CD8-positive, alpha-beta T cell (primary cell): ENCODE measurements at regions of chr19 and their contacts with region 1.

Region 1: GRCh38 chr19:36850559-36851442 is at the start of gene ZNF345:
- DNase-seq: peak; percentile 66 to 94 (median 85)
- ATAC-seq: peak; percentile 81
- H3K4me3 ChIP-seq: peak within 1 kb of the TSS; percentile 83 to 92
- H3K4me3 Mint-ChIP-seq: no peak within 1 kb of the TSS
- H3K27ac ChIP-seq: peak within 1 kb of the TSS; percentile 74 to 94
- H3K27ac Mint-ChIP-seq: no peak within 1 kb of the TSS
- H3K4me1 ChIP-seq: peaks cover 14% of the 10 kb centered on the region
- H3K4me1 Mint-ChIP-seq: peaks cover 20% of the 10 kb centered on the region
- H3K27me3 ChIP-seq: peaks cover 0 to 2% of the 10 kb centered on the region in 2 experiments
- H3K27me3 Mint-ChIP-seq: no peaks in the 10 kb centered on the region
- CTCF ChIP-seq: no peak
- total RNA-seq, gene ZNF345: 7.8 to 8.0 TPM

Region 2: DNA sequence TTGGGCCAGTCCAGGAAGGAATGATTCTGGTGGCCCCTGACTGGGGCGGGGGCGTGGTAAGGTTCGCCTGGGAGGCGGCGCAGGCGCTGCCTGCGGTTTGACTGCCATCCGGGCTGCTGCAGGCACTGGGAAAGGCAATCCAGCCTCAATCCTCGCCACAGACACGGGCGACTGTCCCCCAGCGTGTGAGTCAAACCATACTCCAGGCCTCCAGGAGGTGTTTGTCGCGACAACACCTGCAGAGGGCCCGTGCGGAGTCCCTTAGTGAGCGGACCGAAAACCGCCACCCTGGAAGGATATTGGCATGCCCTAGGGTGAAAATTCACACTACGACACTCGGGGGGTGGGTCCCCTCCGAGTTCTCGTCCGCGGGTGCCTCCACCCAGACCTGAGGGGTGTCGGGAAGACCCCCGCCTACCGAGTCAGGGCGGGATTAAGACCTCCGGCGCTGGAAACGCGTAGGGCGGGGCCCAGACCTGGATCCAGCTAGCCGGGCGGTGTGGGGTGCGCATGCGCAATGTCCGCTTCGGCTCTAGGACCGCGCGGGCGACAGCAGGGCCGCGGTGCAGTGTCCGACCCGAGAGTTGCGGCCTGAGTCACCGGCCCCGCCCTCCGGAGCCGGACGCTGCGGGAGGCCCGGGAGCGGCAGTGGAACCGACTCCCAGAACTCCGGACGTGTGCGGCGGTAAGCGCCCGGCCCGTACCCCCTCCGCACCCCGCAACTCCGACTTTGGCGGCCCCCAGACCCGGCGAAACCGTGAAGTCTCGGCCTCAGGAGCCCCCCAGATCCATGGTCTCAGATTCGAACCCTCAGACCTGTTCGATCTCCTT is 711.1 kb before region 1 on chr19 and contains the start of gene CAPNS1:
- CTCF ChIA-PET with region 1: no interaction called
- POLR2A ChIA-PET with region 1: no interaction called
- intact Hi-C with region 1: loop called in 1 of 2 experiments (anchors 2 kb)
- DNase-seq: peak; percentile 77 to 96 (median 92)
- ATAC-seq: peak; percentile 55
- H3K4me3 ChIP-seq: peak within 1 kb of the TSS; percentile 90 to 99
- H3K4me3 Mint-ChIP-seq: peak within 1 kb of the TSS; percentile 96
- H3K27ac ChIP-seq: peak within 1 kb of the TSS; percentile 83 to 90
- H3K27ac Mint-ChIP-seq: peak within 1 kb of the TSS; percentile 93
- H3K4me1 ChIP-seq: peaks cover 13% of the 10 kb centered on the region
- H3K4me1 Mint-ChIP-seq: peaks cover 14% of the 10 kb centered on the region
- H3K27me3 ChIP-seq: no peaks in the 10 kb centered on the region
- H3K27me3 Mint-ChIP-seq: no peaks in the 10 kb centered on the region
- CTCF ChIP-seq: peak; percentile 26
- total RNA-seq, gene CAPNS1: 141 to 146 TPM

Region 3: DNA sequence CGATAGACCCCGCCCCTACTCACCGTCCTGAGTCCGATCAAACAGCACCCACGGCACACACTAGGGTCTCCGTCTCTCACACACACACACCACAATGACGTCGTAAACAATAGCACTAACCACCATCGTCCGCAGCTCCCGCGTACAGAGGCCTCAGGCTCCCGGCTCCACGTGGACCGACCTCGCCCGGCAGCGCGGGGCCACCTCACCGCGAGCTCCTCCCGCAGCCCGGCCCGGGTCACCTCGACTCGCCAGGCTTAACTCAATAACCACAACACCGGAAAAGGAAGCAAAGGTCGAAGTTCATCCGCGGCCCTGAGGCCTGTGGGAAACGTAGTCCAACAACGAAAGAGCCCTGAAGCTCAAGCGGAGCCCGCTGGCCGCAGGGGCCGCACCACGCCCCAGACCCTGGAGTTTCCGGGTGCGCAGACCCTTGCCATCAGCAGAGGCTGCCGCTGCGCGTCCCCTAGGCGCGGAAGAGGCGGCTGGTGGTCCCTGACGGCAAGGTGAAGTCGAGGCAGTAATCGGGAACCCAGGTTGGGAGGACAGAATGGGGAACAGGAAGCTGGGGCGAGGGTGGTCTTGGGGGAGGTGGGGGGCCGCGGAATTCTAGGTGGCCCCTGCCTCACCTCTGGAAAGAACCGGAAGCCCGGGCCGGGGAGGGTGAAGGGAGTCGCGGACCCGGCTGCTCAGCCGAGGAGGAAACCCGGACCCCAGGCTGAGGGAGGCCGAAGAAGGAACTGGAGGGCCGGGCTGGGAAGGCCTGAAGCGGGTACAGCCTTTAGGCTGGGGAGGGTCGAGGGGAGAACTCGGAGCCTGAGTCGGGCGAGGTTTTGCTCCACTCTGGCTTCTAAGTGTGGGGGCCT is 277.5 kb before region 1 on chr19 and contains the start of gene ZNF529:
- CTCF ChIA-PET with region 1: no interaction called
- POLR2A ChIA-PET with region 1: no interaction called
- intact Hi-C with region 1: loop called in 1 of 2 experiments (anchors 2 kb)
- DNase-seq: peak; percentile 75 to 98 (median 85)
- ATAC-seq: peak; percentile 93
- H3K4me3 ChIP-seq: peak within 1 kb of the TSS; percentile 87 to 99
- H3K4me3 Mint-ChIP-seq: peak within 1 kb of the TSS; percentile 87
- H3K27ac ChIP-seq: peak within 1 kb of the TSS; percentile 96 to 98
- H3K27ac Mint-ChIP-seq: peak within 1 kb of the TSS; percentile 99
- H3K4me1 ChIP-seq: peaks cover 19% of the 10 kb centered on the region
- H3K4me1 Mint-ChIP-seq: peaks cover 45% of the 10 kb centered on the region
- H3K27me3 ChIP-seq: no peaks in the 10 kb centered on the region
- H3K27me3 Mint-ChIP-seq: no peaks in the 10 kb centered on the region
- CTCF ChIP-seq: no peak
- total RNA-seq, gene ZNF529: 44.0 to 46.4 TPM

Region 4: GRCh38 chr19:36837906-36838783 is 12.7 kb before region 1 on chr19 and contains the start of gene ZNF790:
- CTCF ChIA-PET with region 1: interaction called, 23 read pairs
- POLR2A ChIA-PET with region 1: interaction called, 80 read pairs
- intact Hi-C with region 1: loop called (anchors 1 kb)
- DNase-seq: peak; percentile 62 to 92 (median 81)
- ATAC-seq: peak; percentile 87
- H3K4me3 ChIP-seq: peak within 1 kb of the TSS; percentile 86 to 91
- H3K4me3 Mint-ChIP-seq: no peak within 1 kb of the TSS
- H3K27ac ChIP-seq: peak within 1 kb of the TSS; percentile 88 to 97
- H3K27ac Mint-ChIP-seq: no peak within 1 kb of the TSS
- H3K4me1 ChIP-seq: peaks cover 17% of the 10 kb centered on the region
- H3K4me1 Mint-ChIP-seq: peaks cover 21% of the 10 kb centered on the region
- H3K27me3 ChIP-seq: no peaks in the 10 kb centered on the region
- H3K27me3 Mint-ChIP-seq: no peaks in the 10 kb centered on the region
- CTCF ChIP-seq: no peak
- total RNA-seq, gene ZNF790: 2.1 to 3.6 TPM

Region 5: DNA sequence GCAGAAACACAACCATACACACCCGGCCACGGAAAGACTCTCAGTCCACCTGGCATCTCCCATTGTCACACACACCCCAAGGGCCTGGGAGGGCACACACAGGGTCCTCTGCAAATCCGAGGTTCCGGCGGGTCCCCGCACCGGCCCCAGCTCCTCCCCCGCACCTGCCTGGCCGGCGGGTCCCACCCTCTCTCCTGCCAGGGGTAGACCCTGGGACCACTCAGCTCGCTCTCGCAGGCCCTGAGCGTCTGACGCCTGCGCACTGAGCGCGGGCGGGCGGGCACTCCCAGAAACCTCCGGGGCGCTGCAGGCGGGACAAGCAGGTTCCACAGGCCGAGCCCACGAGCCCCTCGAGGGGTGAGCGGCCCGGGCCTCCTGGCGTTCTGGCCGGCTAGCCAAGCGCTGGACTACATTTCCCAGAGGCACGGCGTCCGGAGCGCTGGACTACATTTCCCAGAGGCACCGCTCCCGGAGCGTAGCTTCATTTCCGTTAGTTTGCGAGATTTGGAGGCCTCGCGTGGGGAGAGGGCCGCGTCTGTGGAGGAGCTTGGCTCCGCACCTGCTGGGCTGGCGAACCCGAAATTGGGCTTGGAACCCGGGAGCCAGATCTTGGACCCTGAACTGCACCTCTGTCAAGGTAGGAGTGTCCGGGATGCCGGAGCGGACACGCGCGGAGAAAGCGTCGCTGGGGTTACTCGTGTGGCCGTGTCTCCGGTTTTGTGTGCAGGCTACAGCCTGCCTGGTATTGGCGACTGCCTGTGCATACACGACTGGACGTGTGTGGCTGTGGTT is 227.3 kb after region 1 on chr19 and contains the start of gene ZNF420:
- CTCF ChIA-PET with region 1: no interaction called
- POLR2A ChIA-PET with region 1: interaction called, 7 read pairs
- intact Hi-C with region 1: loop called (anchors 1 kb)
- DNase-seq: peak; percentile 78 to 96 (median 89)
- ATAC-seq: peak; percentile 88
- H3K4me3 ChIP-seq: peak within 1 kb of the TSS; percentile 60 to 71
- H3K4me3 Mint-ChIP-seq: peak within 1 kb of the TSS; percentile 89
- H3K27ac ChIP-seq: peak within 1 kb of the TSS; percentile 56 to 82
- H3K27ac Mint-ChIP-seq: peak within 1 kb of the TSS; percentile 92
- H3K4me1 ChIP-seq: peaks cover 9% of the 10 kb centered on the region
- H3K4me1 Mint-ChIP-seq: peaks cover 34% of the 10 kb centered on the region
- H3K27me3 ChIP-seq: no peaks in the 10 kb centered on the region
- H3K27me3 Mint-ChIP-seq: no peaks in the 10 kb centered on the region
- CTCF ChIP-seq: no peak
- total RNA-seq, gene ZNF420: 7.0 to 8.9 TPM

Region 6: DNA sequence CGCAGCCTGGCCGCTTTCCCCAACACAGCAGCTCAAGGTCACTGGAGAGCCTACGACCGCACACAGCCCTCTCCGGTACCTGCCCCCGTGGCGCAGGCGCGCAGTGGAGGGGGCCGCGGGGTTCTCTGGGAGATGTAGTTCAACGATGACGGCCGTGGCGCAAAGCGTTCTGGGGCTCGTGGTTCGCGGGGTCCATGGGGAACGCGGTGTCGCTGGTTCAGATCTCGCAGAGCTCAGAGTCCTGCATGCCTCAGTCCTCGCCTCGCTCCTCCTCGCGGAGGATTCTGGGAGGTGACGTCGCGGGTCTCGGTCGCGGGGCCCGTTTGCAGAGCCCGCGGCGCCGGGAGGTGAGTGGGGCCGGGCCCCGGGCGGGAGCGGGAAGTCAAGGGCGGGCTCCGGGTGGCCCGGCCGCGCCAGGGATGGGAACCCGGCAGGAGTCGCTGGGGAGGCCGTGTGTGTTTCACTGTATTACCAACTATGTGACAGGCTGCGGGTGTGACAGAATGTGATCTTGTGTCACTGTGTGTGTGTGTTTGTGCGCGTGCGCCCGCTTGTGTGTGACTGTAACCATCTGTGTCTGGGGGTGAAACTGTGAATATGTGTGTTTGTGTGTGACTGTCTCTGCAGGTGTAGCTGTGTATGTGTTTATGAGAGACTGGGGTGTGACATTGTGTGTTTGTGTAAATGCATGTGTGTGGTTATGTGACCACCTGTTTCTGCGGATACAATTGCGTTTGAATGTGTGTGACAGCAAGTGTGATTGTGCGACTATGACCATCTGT is 520.3 kb after region 1 on chr19 and contains the start of gene ZNF527:
- CTCF ChIA-PET with region 1: no interaction called
- POLR2A ChIA-PET with region 1: no interaction called
- intact Hi-C with region 1: loop called in 1 of 2 experiments (anchors 1 kb)
- DNase-seq: peak; percentile 94 to 98 (median 97)
- ATAC-seq: peak; percentile 92
- H3K4me3 ChIP-seq: peak within 1 kb of the TSS; percentile 80 to 95
- H3K4me3 Mint-ChIP-seq: peak within 1 kb of the TSS; percentile 99
- H3K27ac ChIP-seq: peak within 1 kb of the TSS; percentile 82 to 90
- H3K27ac Mint-ChIP-seq: peak within 1 kb of the TSS; percentile 96
- H3K4me1 ChIP-seq: peaks cover 7% of the 10 kb centered on the region
- H3K4me1 Mint-ChIP-seq: peaks cover 20% of the 10 kb centered on the region
- H3K27me3 ChIP-seq: no peaks in the 10 kb centered on the region
- H3K27me3 Mint-ChIP-seq: no peaks in the 10 kb centered on the region
- CTCF ChIP-seq: no peak
- total RNA-seq, gene ZNF527: 12.9 to 14.2 TPM